ENCODE measurements at regions of chr12 and their contacts with region 1.

Region 1: GRCh38 chr12:4141348-4142270 is 132.0 kb upstream of the CCND2 start:
- DNase-seq: no peak
- H3K4me3 Mint-ChIP-seq: peak overlapping the region; percentile 67
- H3K27ac Mint-ChIP-seq: peak overlapping the region; percentile 94
- H3K4me1 Mint-ChIP-seq: peaks cover 86% of the 10 kb centered on the region
- H3K27me3 Mint-ChIP-seq: no peaks in the 10 kb centered on the region

Region 2: GRCh38 chr12:3920351-3921150 is 221.1 kb before region 1 on chr12:
- CTCF ChIA-PET with region 1: no interaction called
- POLR2A ChIA-PET with region 1: no interaction called
- DNase-seq: no peak
- H3K4me3 Mint-ChIP-seq: no peak overlapping the region
- H3K27ac Mint-ChIP-seq: no peak overlapping the region
- H3K4me1 Mint-ChIP-seq: peaks cover 16% of the 10 kb centered on the region
- H3K27me3 Mint-ChIP-seq: peaks cover 5% of the 10 kb centered on the region

Region 3: GRCh38 chr12:4118017-4118510 is 23.5 kb before region 1 on chr12:
- CTCF ChIA-PET with region 1: interaction called, 11 read pairs
- POLR2A ChIA-PET with region 1: interaction called, 3 read pairs
- DNase-seq: peak; percentile 28
- H3K4me3 Mint-ChIP-seq: peak overlapping the region; percentile 58
- H3K27ac Mint-ChIP-seq: peak overlapping the region; percentile 90
- H3K4me1 Mint-ChIP-seq: peaks cover 67% of the 10 kb centered on the region
- H3K27me3 Mint-ChIP-seq: no peaks in the 10 kb centered on the region

Region 4: DNA sequence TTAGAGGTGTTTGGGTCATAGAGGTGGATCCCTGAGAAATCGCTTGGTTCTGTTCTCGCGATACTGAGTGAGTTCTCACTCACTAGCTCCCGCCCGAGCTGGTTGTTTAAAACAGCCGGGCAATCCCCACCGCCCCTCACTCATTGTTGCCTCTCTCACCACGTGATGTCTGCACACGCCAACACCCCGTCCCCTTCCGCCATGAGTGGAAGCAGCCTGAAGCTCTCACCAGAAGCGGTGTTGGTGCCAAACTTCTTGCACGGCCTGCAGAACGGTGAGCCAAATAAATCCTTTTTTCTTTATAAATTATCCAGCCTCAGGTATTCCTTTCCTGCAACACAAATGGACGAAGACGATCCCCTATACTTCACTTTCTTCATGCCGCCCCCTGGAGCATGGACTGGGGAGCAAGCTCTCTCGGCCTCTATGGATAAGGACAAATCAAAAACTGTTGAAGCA is 86.5 kb after region 1 on chr12:
- CTCF ChIA-PET with region 1: no interaction called
- POLR2A ChIA-PET with region 1: no interaction called
- DNase-seq: no peak
- H3K4me3 Mint-ChIP-seq: no peak overlapping the region
- H3K27ac Mint-ChIP-seq: no peak overlapping the region
- H3K4me1 Mint-ChIP-seq: peaks cover 11% of the 10 kb centered on the region
- H3K27me3 Mint-ChIP-seq: peaks cover 3% of the 10 kb centered on the region

Region 5: GRCh38 chr12:4379405-4379804 is 237.8 kb after region 1 on chr12 and contains the start of gene FGF23:
- CTCF ChIA-PET with region 1: no interaction called
- POLR2A ChIA-PET with region 1: no interaction called
- DNase-seq: no peak
- H3K4me3 Mint-ChIP-seq: no peak within 1 kb of the TSS
- H3K27ac Mint-ChIP-seq: no peak within 1 kb of the TSS
- H3K4me1 Mint-ChIP-seq: no peaks in the 10 kb centered on the region
- H3K27me3 Mint-ChIP-seq: peaks cover 42% of the 10 kb centered on the region
- total RNA-seq, gene FGF23: not detected

Measured in activated CD4-positive, alpha-beta T cell treated with anti-CD3 and anti-CD28 coated beads, Interleukin-2, amount 10 ng/mL, durations not matched to agents 7 days and 5 days (primary cell).